Pancreas (tissue), 10 donors: ENCODE measurements at regions of chr1 and their contacts with region 1.

Region 1: GRCh38 chr1:169809370-169810095 is 14.8 kb upstream of the METTL18 start:
- DNase-seq: no peak
- ATAC-seq: peak in 3 of 4 donors; percentile 67 to 72 (median 67)
- H3K4me3 ChIP-seq: no peak overlapping the region
- H3K27ac ChIP-seq: no peak overlapping the region
- H3K4me1 ChIP-seq: no peaks in the 10 kb centered on the region
- H3K27me3 ChIP-seq: no peaks in the 10 kb centered on the region
- CTCF ChIP-seq: peak in 3 of 4 donors; percentile 29 to 58 (median 34)

Region 2: GRCh38 chr1:169473352-169473751 is 336.2 kb before region 1 on chr1:
- intact Hi-C with region 1: loop called in 1 of 3 experiments (anchors 10 kb)
- DNase-seq: no peak
- ATAC-seq: no peak
- H3K4me3 ChIP-seq: no peak overlapping the region
- H3K27ac ChIP-seq: no peak overlapping the region
- H3K4me1 ChIP-seq: peaks cover 0 to 6% (median 0%) of the 10 kb centered on the region in 3 donors
- H3K27me3 ChIP-seq: no peaks in the 10 kb centered on the region
- CTCF ChIP-seq: no peak

Region 3: GRCh38 chr1:169765580-169766331 is 43.8 kb before region 1 on chr1:
- intact Hi-C with region 1: no loop called
- DNase-seq: no peak
- ATAC-seq: no peak
- H3K4me3 ChIP-seq: no peak overlapping the region
- H3K27ac ChIP-seq: no peak overlapping the region
- H3K4me1 ChIP-seq: no peaks in the 10 kb centered on the region
- H3K27me3 ChIP-seq: no peaks in the 10 kb centered on the region
- CTCF ChIP-seq: no peak